Activated CD4-positive, alpha-beta memory T cell treated with anti-CD3 and anti-CD28 coated beads for 36 hours (primary cell): ENCODE measurements at regions of chr11 and their contacts with region 1.

Region 1: GRCh38 chr11:106133529-106133928 is 56.1 kb downstream of the AASDHPPT start:
- DNase-seq: no peak
- H3K4me3 Mint-ChIP-seq: no peak overlapping the region
- H3K27ac Mint-ChIP-seq: no peak overlapping the region
- H3K4me1 Mint-ChIP-seq: no peaks in the 10 kb centered on the region
- H3K27me3 Mint-ChIP-seq: peaks cover 19% of the 10 kb centered on the region

Region 2: GRCh38 chr11:105979997-105980703 is 153.4 kb before region 1 on chr11:
- CTCF ChIA-PET with region 1: no interaction called
- POLR2A ChIA-PET with region 1: no interaction called
- intact Hi-C with region 1: no loop called
- DNase-seq: no peak
- H3K4me3 Mint-ChIP-seq: no peak overlapping the region
- H3K27ac Mint-ChIP-seq: no peak overlapping the region
- H3K4me1 Mint-ChIP-seq: no peaks in the 10 kb centered on the region
- H3K27me3 Mint-ChIP-seq: peaks cover 2% of the 10 kb centered on the region

Region 3: DNA sequence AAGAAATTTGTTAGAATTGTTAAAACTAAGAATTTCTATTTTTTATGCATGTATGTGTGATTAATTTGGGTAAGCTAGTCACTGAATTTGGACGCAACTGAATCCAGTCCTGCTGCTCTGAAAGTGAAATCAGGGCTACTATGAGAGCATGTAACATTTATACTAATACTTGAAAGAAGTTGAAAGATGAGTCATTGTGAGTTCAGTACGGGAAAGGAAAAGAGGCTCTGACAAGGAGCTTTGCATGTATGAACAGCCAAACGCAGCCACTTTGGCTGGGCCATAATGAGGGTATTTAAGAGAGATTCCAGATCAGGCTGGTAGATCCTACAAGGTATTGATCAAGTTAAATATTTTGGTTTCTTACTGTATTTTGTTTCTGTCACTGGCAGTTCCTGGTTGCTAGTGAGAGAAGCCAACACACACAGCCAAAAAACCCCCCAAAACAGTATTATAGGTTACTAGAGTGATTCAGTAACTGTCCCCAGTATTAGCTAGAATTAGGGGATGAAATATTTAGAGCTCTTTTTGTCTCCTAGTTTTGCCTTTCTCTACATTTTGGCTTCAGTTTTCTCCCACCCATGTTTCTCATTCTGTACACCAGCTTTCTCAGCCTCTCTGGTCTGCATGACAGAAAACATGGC is 41.9 kb before region 1 on chr11:
- CTCF ChIA-PET with region 1: no interaction called
- POLR2A ChIA-PET with region 1: no interaction called
- intact Hi-C with region 1: loop called (anchors 2 kb)
- DNase-seq: peak; percentile 48
- H3K4me3 Mint-ChIP-seq: no peak overlapping the region
- H3K27ac Mint-ChIP-seq: peak overlapping the region; percentile 44
- H3K4me1 Mint-ChIP-seq: peaks cover 44% of the 10 kb centered on the region
- H3K27me3 Mint-ChIP-seq: no peaks in the 10 kb centered on the region